ENCODE measurements at regions of chr18 and their contacts with region 1.

Region 1: GRCh38 chr18:47930931-47931717 is 665 bp upstream of the SMAD2 start:
- DNase-seq: peak; percentile 82 to 98 (median 95)
- ATAC-seq: peak; percentile 76
- H3K4me3 ChIP-seq: peak overlapping the region; percentile 61 to 63
- H3K4me3 Mint-ChIP-seq: peak overlapping the region; percentile 78
- H3K27ac ChIP-seq: peak overlapping the region; percentile 62 to 84
- H3K27ac Mint-ChIP-seq: peak overlapping the region; percentile 91
- H3K4me1 ChIP-seq: peaks cover 40% of the 10 kb centered on the region
- H3K4me1 Mint-ChIP-seq: peaks cover 41% of the 10 kb centered on the region
- H3K27me3 ChIP-seq: no peaks in the 10 kb centered on the region
- H3K27me3 Mint-ChIP-seq: no peaks in the 10 kb centered on the region
- CTCF ChIP-seq: no peak

Region 2: DNA sequence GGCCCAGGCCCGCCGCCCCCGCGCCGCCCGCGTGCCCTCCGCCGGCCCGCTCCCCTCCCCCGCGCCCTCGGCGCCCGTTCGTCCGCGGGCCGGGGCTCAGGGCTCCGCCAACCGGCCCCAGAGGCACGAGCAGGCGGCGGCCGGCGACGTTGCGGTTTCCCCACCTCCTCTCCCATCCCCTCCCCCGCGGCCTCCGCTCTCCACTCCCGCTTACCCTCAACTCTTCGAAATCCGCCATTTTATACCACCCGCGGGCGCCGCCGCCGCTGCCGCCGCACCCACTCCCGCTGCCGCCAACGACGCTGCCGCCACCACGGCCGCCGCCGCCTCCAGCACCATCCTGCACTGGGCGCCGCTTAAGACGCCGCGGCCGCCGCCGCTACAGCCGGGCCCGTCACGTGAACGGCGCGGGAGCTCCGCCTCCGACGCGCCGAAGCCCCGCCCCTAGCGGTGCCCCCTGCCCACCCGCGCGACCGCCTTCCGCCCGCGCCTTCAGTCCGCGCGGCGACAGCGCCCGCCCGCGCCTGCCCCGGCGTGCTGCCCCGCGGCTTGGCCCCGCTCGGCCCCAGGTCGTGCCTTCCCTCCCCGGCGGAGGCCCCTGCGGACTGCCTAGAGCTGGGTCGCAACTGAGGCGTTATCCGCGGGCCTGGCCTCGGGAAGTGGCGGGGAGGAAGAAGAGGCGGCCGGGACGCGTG is 1013.9 kb before region 1 on chr18 and contains the starts of genes KATNAL2 and PIAS2:
- CTCF ChIA-PET with region 1: no interaction called
- POLR2A ChIA-PET with region 1: no interaction called
- intact Hi-C with region 1: loop called (anchors 5 to 10 kb)
- DNase-seq: peak; percentile 38 to 88 (median 69)
- ATAC-seq: peak; percentile 82
- H3K4me3 ChIP-seq: peak within 1 kb of the TSS; percentile 56 to 79
- H3K4me3 Mint-ChIP-seq: peak within 1 kb of the TSS; percentile 90
- H3K27ac ChIP-seq: peak within 1 kb of the TSS; percentile 55 to 75
- H3K27ac Mint-ChIP-seq: peak within 1 kb of the TSS; percentile 91
- H3K4me1 ChIP-seq: peaks cover 12% of the 10 kb centered on the region
- H3K4me1 Mint-ChIP-seq: peaks cover 55% of the 10 kb centered on the region
- H3K27me3 ChIP-seq: no peaks in the 10 kb centered on the region
- H3K27me3 Mint-ChIP-seq: no peaks in the 10 kb centered on the region
- CTCF ChIP-seq: no peak
- total RNA-seq, gene KATNAL2: 1.0 to 2.1 TPM
- total RNA-seq, gene PIAS2: 38.4 to 40.2 TPM

Region 3: GRCh38 chr18:47175908-47176575 is 755.1 kb before region 1 on chr18 and contains the start of gene IER3IP1:
- CTCF ChIA-PET with region 1: no interaction called
- POLR2A ChIA-PET with region 1: no interaction called
- intact Hi-C with region 1: loop called in 1 of 2 experiments (anchors 10 kb)
- DNase-seq: peak; percentile 68 to 91 (median 88)
- ATAC-seq: peak; percentile 93
- H3K4me3 ChIP-seq: peak within 1 kb of the TSS; percentile 90 to 93
- H3K4me3 Mint-ChIP-seq: peak within 1 kb of the TSS; percentile 54
- H3K27ac ChIP-seq: peak within 1 kb of the TSS; percentile 34 to 46
- H3K27ac Mint-ChIP-seq: peak within 1 kb of the TSS; percentile 87
- H3K4me1 ChIP-seq: peaks cover 19% of the 10 kb centered on the region
- H3K4me1 Mint-ChIP-seq: peaks cover 8% of the 10 kb centered on the region
- H3K27me3 ChIP-seq: no peaks in the 10 kb centered on the region
- H3K27me3 Mint-ChIP-seq: no peaks in the 10 kb centered on the region
- CTCF ChIP-seq: no peak
- total RNA-seq, gene IER3IP1: 2.5 to 2.8 TPM

Region 4: GRCh38 chr18:47901624-47902362 is 29.3 kb before region 1 on chr18:
- CTCF ChIA-PET with region 1: no interaction called
- POLR2A ChIA-PET with region 1: interaction called, 46 read pairs
- intact Hi-C with region 1: no loop called
- DNase-seq: peak in 3 of 9 experiments; percentile 13 to 65 (median 43)
- ATAC-seq: peak; percentile 92
- H3K4me3 ChIP-seq: peak overlapping the region in 1 of 2 experiments; percentile 6
- H3K4me3 Mint-ChIP-seq: peak overlapping the region; percentile 62
- H3K27ac ChIP-seq: peak overlapping the region; percentile 6 to 65
- H3K27ac Mint-ChIP-seq: peak overlapping the region; percentile 91
- H3K4me1 ChIP-seq: peaks cover 33% of the 10 kb centered on the region
- H3K4me1 Mint-ChIP-seq: peaks cover 82% of the 10 kb centered on the region
- H3K27me3 ChIP-seq: no peaks in the 10 kb centered on the region
- H3K27me3 Mint-ChIP-seq: no peaks in the 10 kb centered on the region
- CTCF ChIP-seq: no peak

Region 5: DNA sequence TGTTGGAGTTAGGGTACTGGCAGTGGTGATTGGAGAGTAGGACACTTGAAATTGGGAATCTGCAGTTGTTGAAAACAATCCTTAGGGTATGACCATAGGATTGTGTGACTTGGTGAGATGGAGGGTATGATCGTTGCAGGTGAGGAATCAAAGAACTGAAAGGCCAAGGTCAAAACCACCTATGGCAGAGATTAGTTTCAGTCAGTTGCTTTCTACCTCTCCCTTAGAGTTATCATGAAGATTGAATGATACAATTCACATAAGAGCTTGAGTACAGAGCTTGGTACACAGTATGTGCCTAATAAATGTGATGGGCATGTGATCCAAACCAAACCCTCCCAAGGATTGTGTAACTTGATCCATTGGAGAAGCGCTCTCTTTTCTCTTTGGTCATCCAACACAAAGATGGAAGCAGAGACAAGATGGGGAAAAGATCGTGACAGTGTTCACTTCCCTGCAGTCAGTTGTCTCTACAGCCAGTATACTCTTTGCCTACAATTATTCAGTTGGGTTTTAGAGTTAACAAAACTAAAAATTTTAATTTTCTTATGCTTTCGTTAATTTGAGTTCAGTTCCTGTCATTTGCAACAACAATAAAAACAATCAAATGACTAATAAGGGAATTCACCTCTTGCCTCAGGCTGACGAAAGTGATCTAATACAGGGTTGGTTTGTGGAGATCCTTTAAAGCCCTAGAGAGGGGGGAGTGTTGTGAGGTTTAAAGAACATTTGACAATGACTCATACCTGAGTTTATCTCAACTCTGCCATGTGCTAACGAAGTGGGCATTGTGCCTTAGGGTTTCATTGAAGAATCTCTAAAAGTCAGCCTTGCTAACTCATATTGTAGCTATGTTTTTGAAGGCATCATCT is 14.1 kb after region 1 on chr18:
- CTCF ChIA-PET with region 1: no interaction called
- POLR2A ChIA-PET with region 1: interaction called, 10 read pairs
- intact Hi-C with region 1: no loop called
- DNase-seq: peak in 2 of 9 experiments; percentile 17 to 23
- ATAC-seq: peak; percentile 58
- H3K4me3 ChIP-seq: no peak overlapping the region
- H3K4me3 Mint-ChIP-seq: no peak overlapping the region
- H3K27ac ChIP-seq: no peak overlapping the region
- H3K27ac Mint-ChIP-seq: no peak overlapping the region
- H3K4me1 ChIP-seq: no peaks in the 10 kb centered on the region
- H3K4me1 Mint-ChIP-seq: no peaks in the 10 kb centered on the region
- H3K27me3 ChIP-seq: peaks cover 0 to 2% of the 10 kb centered on the region in 2 experiments
- H3K27me3 Mint-ChIP-seq: peaks cover 3% of the 10 kb centered on the region
- CTCF ChIP-seq: no peak

Region 6: DNA sequence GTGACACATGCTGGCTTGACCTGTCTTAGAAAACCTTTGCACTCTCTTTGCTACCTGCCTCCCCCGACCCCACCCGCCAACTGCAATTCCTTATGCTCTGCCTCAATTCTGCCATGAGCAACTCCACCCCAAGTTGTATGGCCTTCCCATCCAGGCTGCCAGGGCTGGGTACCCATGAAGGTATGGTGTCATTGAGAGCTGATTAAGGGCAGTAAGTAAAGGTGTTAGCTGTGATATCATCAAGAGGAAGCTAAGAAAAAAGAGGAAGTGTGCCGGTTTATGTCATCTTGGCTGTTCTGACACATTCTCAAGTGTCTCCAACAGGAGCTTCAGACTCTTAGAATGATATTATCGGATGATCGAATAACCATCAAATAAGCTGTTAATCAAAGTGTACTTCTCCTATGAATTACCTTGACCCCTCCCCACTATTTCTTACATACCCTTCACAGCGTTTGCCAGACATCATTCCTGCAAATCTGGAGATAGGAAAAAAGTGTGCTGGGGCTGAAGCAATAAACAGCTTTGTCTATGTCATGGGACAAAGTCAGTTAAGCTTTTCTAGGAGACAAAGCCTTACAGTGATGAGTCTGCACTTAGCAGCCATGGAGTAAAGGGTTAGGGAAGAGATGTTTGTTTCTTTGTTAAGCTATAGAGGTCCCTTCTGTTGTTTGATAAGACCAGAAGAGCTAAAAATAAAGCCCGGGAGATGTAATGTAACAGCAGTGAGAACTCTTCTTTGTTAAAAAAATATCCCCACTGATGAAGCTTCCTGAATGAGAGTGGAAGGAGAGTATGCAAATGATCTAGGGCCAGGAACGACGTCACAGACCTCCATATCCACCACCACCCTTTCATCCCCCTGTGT is 39.8 kb after region 1 on chr18:
- CTCF ChIA-PET with region 1: no interaction called
- POLR2A ChIA-PET with region 1: no interaction called
- intact Hi-C with region 1: no loop called
- DNase-seq: peak in 1 of 9 experiments; percentile 17
- ATAC-seq: no peak
- H3K4me3 ChIP-seq: no peak overlapping the region
- H3K4me3 Mint-ChIP-seq: no peak overlapping the region
- H3K27ac ChIP-seq: no peak overlapping the region
- H3K27ac Mint-ChIP-seq: no peak overlapping the region
- H3K4me1 ChIP-seq: no peaks in the 10 kb centered on the region
- H3K4me1 Mint-ChIP-seq: no peaks in the 10 kb centered on the region
- H3K27me3 ChIP-seq: no peaks in the 10 kb centered on the region
- H3K27me3 Mint-ChIP-seq: peaks cover 7% of the 10 kb centered on the region
- CTCF ChIP-seq: no peak

Region 7: GRCh38 chr18:48007955-48008701 is 77.0 kb after region 1 on chr18:
- CTCF ChIA-PET with region 1: no interaction called
- POLR2A ChIA-PET with region 1: interaction called, 3 read pairs
- intact Hi-C with region 1: loop called in 1 of 2 experiments (anchors 2 kb)
- DNase-seq: peak in 8 of 9 experiments; percentile 33 to 70 (median 47)
- ATAC-seq: peak; percentile 88
- H3K4me3 ChIP-seq: peak overlapping the region; percentile 29 to 58
- H3K4me3 Mint-ChIP-seq: peak overlapping the region; percentile 80
- H3K27ac ChIP-seq: no peak overlapping the region
- H3K27ac Mint-ChIP-seq: no peak overlapping the region
- H3K4me1 ChIP-seq: peaks cover 10% of the 10 kb centered on the region
- H3K4me1 Mint-ChIP-seq: peaks cover 7% of the 10 kb centered on the region
- H3K27me3 ChIP-seq: peaks cover 3 to 4% of the 10 kb centered on the region in 2 experiments
- H3K27me3 Mint-ChIP-seq: peaks cover 28% of the 10 kb centered on the region
- CTCF ChIP-seq: peak; percentile 76

Region 8: GRCh38 chr18:49813319-49814146 is 1882.4 kb after region 1 on chr18 and contains the start of gene ACAA2:
- CTCF ChIA-PET with region 1: no interaction called
- POLR2A ChIA-PET with region 1: no interaction called
- intact Hi-C with region 1: loop called in 1 of 2 experiments (anchors 5 kb)
- DNase-seq: peak; percentile 53 to 91 (median 77)
- ATAC-seq: peak; percentile 81
- H3K4me3 ChIP-seq: peak within 1 kb of the TSS; percentile 88 to 93
- H3K4me3 Mint-ChIP-seq: peak within 1 kb of the TSS; percentile 97
- H3K27ac ChIP-seq: peak within 1 kb of the TSS; percentile 90 to 95
- H3K27ac Mint-ChIP-seq: peak within 1 kb of the TSS; percentile 95
- H3K4me1 ChIP-seq: peaks cover 37% of the 10 kb centered on the region
- H3K4me1 Mint-ChIP-seq: peaks cover 62% of the 10 kb centered on the region
- H3K27me3 ChIP-seq: no peaks in the 10 kb centered on the region
- H3K27me3 Mint-ChIP-seq: no peaks in the 10 kb centered on the region
- CTCF ChIP-seq: no peak
- total RNA-seq, gene ACAA2: 9.5 to 10.0 TPM